IMR-90 (cell line): ENCODE measurements at regions of chr11 and their contacts with region 1.

Region 1: DNA sequence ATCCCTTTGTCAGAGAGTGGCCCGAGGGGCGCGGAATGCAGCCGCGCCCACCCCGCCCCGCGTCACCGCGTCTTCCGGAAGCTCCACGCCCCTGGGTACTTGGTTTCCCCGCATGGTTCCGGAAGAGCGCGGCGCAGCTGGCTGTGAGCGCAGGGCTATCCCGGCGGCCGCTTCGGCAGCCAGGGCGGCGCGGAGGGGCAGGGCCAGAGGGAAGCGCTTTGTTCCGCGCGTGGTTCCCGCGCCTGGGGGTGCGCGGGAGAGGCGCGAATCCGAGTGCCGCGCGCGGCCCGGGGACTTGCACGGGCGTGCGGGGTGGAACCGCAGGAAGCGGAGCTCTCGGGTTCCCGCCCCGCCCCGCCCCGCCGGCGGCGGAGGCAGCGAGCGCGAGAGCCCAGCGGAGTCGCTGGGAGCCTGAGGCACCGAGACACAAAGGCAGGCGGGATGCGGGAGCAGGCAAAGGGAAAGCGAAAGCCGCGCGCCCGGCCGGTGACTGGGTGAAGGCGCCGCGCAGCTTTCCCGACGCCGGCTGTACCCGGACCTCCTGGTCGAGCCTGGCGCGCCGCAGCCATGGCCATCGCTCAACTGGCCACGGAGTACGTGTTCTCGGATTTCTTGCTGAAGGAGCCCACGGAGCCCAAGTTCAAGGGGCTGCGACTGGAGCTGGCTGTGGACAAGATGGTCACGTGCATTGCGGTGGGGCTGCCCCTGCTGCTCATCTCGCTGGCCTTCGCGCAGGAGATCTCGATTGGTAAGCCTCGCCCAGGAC is at the start of gene PANX1:
- DNase-seq: peak; percentile 85
- ATAC-seq: peak; percentile 80
- H3K4me3 ChIP-seq: peak within 1 kb of the TSS; percentile 88
- H3K27ac ChIP-seq: peak within 1 kb of the TSS; percentile 90
- H3K4me1 ChIP-seq: peaks cover 18% of the 10 kb centered on the region
- H3K27me3 ChIP-seq: no peaks in the 10 kb centered on the region
- CTCF ChIP-seq: no peak
- POLR2A ChIP-seq: peak; percentile 81
- RAD21 ChIP-seq: no peak
- total RNA-seq, gene PANX1: 70.3 and 70.8 TPM in 2 replicates

Region 2: GRCh38 chr11:93020248-93021046 is 1108.5 kb before region 1 on chr11:
- CTCF ChIA-PET with region 1: no interaction called
- POLR2A ChIA-PET with region 1: no interaction called
- dilution Hi-C with region 1: no loop called
- in situ Hi-C with region 1: loop called (anchors 25 kb)
- intact Hi-C with region 1: no loop called
- DNase-seq: peak; percentile 92
- ATAC-seq: peak; percentile 79
- H3K4me3 ChIP-seq: peak overlapping the region; percentile 29; the same call in 1 of the 2 replicates
- H3K27ac ChIP-seq: peak overlapping the region; percentile 99
- H3K4me1 ChIP-seq: peaks cover 16% of the 10 kb centered on the region
- H3K27me3 ChIP-seq: no peaks in the 10 kb centered on the region
- CTCF ChIP-seq: no peak
- POLR2A ChIP-seq: no peak
- RAD21 ChIP-seq: no peak

Region 3: DNA sequence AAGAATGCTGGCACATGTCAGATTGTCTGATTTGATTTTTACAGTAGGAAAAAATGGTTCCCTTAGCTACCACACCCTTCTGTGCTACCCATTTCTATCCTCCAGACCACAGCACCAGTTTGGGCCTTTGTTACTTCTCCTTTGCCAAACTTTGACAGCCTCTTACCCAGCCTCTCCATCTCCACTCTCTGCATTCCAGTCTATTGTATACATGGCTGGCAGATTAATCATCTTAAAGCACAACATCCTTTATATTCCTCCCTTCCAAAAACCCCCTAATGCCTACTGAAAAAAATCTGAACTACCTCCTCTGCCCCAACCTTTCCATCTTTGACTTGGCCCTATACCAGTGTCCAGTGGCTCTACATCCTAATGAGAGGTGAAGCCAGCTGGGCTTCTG is 11.1 kb before region 1 on chr11:
- CTCF ChIA-PET with region 1: no interaction called
- POLR2A ChIA-PET with region 1: no interaction called
- dilution Hi-C with region 1: no loop called
- in situ Hi-C with region 1: no loop called
- intact Hi-C with region 1: no loop called
- DNase-seq: peak; percentile 49
- ATAC-seq: peak; percentile 56
- H3K4me3 ChIP-seq: no peak overlapping the region
- H3K27ac ChIP-seq: no peak overlapping the region
- H3K4me1 ChIP-seq: peaks cover 8% of the 10 kb centered on the region; the same call in 1 of the 2 replicates
- H3K27me3 ChIP-seq: no peaks in the 10 kb centered on the region
- CTCF ChIP-seq: no peak
- POLR2A ChIP-seq: no peak
- RAD21 ChIP-seq: no peak

Region 4: DNA sequence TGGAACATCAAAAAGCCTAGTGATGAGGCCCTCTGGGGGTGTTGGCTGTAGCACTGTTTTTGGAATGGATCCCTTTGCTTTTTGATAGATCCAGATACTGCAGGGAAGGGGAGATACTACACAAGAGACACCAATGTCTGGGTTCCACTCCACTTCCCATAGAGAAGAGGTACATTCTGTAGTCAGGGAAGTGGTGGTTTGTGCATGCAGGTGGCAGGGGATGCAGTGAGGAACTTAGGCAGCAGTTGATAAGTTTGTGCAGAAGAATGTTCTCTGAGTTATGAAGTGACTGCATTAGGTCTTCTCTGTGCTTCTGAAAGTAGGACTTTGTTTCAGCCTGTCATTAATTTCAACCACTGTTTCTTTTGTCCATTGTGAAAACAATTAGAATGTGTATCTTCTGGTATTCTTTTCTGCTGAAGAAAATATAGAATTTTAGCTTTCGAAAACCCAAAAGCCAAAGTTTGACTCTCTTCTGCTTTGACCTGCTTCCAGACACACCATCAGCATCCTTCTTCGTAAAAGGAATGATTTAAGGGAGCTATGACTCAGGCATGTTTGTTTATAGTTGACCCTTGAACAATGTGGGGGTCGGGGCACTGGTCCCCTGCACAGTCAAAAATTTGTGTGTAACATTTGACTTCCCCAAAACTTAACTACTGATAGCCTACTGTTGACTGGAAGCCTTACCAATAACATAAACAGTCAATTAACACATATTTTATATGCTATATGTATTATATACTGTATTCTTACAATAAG is 25.3 kb after region 1 on chr11:
- CTCF ChIA-PET with region 1: no interaction called
- POLR2A ChIA-PET with region 1: interaction called, 12 read pairs
- dilution Hi-C with region 1: no loop called
- in situ Hi-C with region 1: no loop called
- intact Hi-C with region 1: no loop called
- DNase-seq: peak; percentile 55
- ATAC-seq: peak; percentile 27
- H3K4me3 ChIP-seq: no peak overlapping the region
- H3K27ac ChIP-seq: no peak overlapping the region
- H3K4me1 ChIP-seq: peaks cover 35% of the 10 kb centered on the region
- H3K27me3 ChIP-seq: no peaks in the 10 kb centered on the region
- CTCF ChIP-seq: no peak
- POLR2A ChIP-seq: no peak
- RAD21 ChIP-seq: no peak

Region 5: GRCh38 chr11:94183886-94184264 is 54.9 kb after region 1 on chr11:
- CTCF ChIA-PET with region 1: no interaction called
- POLR2A ChIA-PET with region 1: no interaction called
- dilution Hi-C with region 1: no loop called
- in situ Hi-C with region 1: no loop called
- intact Hi-C with region 1: loop called (anchors 1 kb)
- DNase-seq: peak; percentile 67
- ATAC-seq: peak; percentile 22; the same call in 1 of the 2 replicates
- H3K4me3 ChIP-seq: no peak overlapping the region
- H3K27ac ChIP-seq: no peak overlapping the region
- H3K4me1 ChIP-seq: peaks cover 26% of the 10 kb centered on the region
- H3K27me3 ChIP-seq: no peaks in the 10 kb centered on the region
- CTCF ChIP-seq: peak; percentile 67
- POLR2A ChIP-seq: no peak
- RAD21 ChIP-seq: peak; percentile 71

Region 6: GRCh38 chr11:94254214-94254613 is 125.3 kb after region 1 on chr11:
- CTCF ChIA-PET with region 1: no interaction called
- POLR2A ChIA-PET with region 1: no interaction called
- dilution Hi-C with region 1: no loop called
- in situ Hi-C with region 1: no loop called
- intact Hi-C with region 1: no loop called
- DNase-seq: no peak
- ATAC-seq: no peak
- H3K4me3 ChIP-seq: no peak overlapping the region
- H3K27ac ChIP-seq: no peak overlapping the region
- H3K4me1 ChIP-seq: no peaks in the 10 kb centered on the region
- H3K27me3 ChIP-seq: no peaks in the 10 kb centered on the region
- CTCF ChIP-seq: no peak
- POLR2A ChIP-seq: no peak
- RAD21 ChIP-seq: no peak

Region 7: GRCh38 chr11:94303966-94304958 is 175.3 kb after region 1 on chr11 and contains the start of gene IZUMO1R:
- CTCF ChIA-PET with region 1: no interaction called
- POLR2A ChIA-PET with region 1: no interaction called
- dilution Hi-C with region 1: no loop called
- in situ Hi-C with region 1: no loop called
- intact Hi-C with region 1: no loop called
- DNase-seq: peak; percentile 20
- ATAC-seq: no peak
- H3K4me3 ChIP-seq: no peak within 1 kb of the TSS
- H3K27ac ChIP-seq: no peak within 1 kb of the TSS
- H3K4me1 ChIP-seq: peaks cover 5% of the 10 kb centered on the region
- H3K27me3 ChIP-seq: peaks cover 11% of the 10 kb centered on the region
- CTCF ChIP-seq: no peak
- POLR2A ChIP-seq: no peak
- RAD21 ChIP-seq: no peak
- total RNA-seq, gene IZUMO1R: not detected in 2 replicates

Region 8: GRCh38 chr11:94926698-94927237 is 797.8 kb after region 1 on chr11:
- CTCF ChIA-PET with region 1: no interaction called
- POLR2A ChIA-PET with region 1: no interaction called
- dilution Hi-C with region 1: no loop called
- in situ Hi-C with region 1: loop called (anchors 25 kb)
- intact Hi-C with region 1: no loop called
- DNase-seq: peak; percentile 94
- ATAC-seq: peak; percentile 83
- H3K4me3 ChIP-seq: no peak overlapping the region
- H3K27ac ChIP-seq: peak overlapping the region; percentile 98
- H3K4me1 ChIP-seq: peaks cover 36% of the 10 kb centered on the region
- H3K27me3 ChIP-seq: no peaks in the 10 kb centered on the region
- CTCF ChIP-seq: no peak
- POLR2A ChIP-seq: no peak
- RAD21 ChIP-seq: no peak